ENCODE measurements at regions of chr22 and their contacts with region 1.

Region 1: GRCh38 chr22:26364066-26365015 is 64.7 kb upstream of the ASPHD2 start:
- DNase-seq: peak; percentile 9
- H3K4me3 ChIP-seq: no peak overlapping the region
- H3K27me3 ChIP-seq: no peaks in the 10 kb centered on the region
- CTCF ChIP-seq: peak; percentile 79

Region 2: GRCh38 chr22:26325641-26326040 is 38.7 kb before region 1 on chr22:
- CTCF ChIA-PET with region 1: interaction called, 11 read pairs
- POLR2A ChIA-PET with region 1: no interaction called
- DNase-seq: no peak
- H3K4me3 ChIP-seq: no peak overlapping the region
- H3K27me3 ChIP-seq: peaks cover 2% of the 10 kb centered on the region; the same call in 1 of the 2 replicates
- CTCF ChIP-seq: no peak

Region 3: DNA sequence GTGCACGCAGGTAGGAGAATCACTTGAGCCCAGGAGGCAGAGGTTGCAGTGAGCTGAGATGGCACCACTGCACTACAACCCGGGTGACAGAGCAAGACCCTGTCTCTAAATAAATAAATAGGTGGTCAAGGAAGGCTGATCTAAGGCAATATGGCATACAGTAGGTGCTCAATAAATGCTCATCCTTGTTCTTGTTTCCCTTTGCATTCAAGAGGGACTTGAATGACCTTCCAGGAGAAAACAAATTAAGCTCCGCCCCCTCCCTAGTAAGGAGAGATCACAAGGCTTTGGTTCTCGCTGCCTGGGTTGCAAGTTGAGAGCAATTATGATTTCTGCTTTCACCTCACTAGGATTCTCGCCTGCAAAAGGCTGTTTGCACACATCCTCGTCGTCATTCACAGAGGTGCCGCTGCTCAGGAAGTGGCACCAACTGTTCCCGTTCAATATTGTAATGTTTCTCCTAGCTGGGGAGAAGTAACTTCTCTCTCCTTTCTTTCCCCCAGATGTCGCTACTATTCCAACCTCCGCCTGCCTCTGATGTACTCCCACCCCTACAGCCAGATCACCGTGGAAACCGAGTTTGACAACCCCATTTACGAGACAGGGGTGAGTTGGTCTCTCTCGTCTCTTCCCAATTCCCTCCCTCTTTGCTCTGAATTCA is 13.0 kb after region 1 on chr22:
- CTCF ChIA-PET with region 1: interaction called, 49 read pairs
- POLR2A ChIA-PET with region 1: no interaction called
- DNase-seq: no peak
- H3K4me3 ChIP-seq: no peak overlapping the region
- H3K27me3 ChIP-seq: peaks cover 8% of the 10 kb centered on the region
- CTCF ChIP-seq: no peak

Region 4: DNA sequence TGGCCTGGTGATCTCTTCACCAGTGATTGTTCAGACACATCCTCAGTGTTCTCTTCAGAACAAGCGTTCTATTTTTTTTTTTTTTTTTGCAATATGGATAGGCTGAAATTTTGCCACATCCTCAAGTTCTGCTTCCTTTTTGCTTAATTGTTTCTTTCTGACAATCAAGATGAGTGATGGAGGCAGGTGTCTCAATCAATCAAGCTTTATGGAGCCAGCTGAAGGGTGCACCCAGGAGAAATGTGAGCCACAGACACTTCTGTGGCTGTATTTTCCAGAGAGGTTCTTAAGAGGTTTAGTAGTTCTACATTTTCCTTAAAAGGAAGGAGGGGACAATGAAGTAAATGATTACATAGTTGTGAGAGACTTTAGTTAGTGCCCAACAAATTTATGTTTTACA is 20.8 kb after region 1 on chr22:
- CTCF ChIA-PET with region 1: interaction called, 49 read pairs
- POLR2A ChIA-PET with region 1: no interaction called
- DNase-seq: no peak
- H3K4me3 ChIP-seq: no peak overlapping the region
- H3K27me3 ChIP-seq: peaks cover 6% of the 10 kb centered on the region
- CTCF ChIP-seq: no peak

Region 5: GRCh38 chr22:26669060-26669481 is 304.7 kb after region 1 on chr22:
- CTCF ChIA-PET with region 1: interaction called, 18 read pairs
- POLR2A ChIA-PET with region 1: no interaction called
- DNase-seq: no peak
- H3K4me3 ChIP-seq: no peak overlapping the region
- H3K27me3 ChIP-seq: no peaks in the 10 kb centered on the region
- CTCF ChIP-seq: peak; percentile 66

Measured in BJ (cell line).